ENCODE measurements at regions of chr1 and their contacts with region 1.

Region 1: GRCh38 chr1:165827268-165828102 is at the start of gene UCK2:
- DNase-seq: peak; percentile 23 to 90
- H3K4me3 ChIP-seq: peak within 1 kb of the TSS; percentile 90 to 96
- H3K27ac ChIP-seq: peak within 1 kb of the TSS; percentile 96 to 97
- H3K4me1 ChIP-seq: peaks cover 0 to 9% of the 10 kb centered on the region in 2 donors
- H3K27me3 ChIP-seq: no peaks in the 10 kb centered on the region
- CTCF ChIP-seq: no peak
- total RNA-seq, gene UCK2: 30.3 TPM

Region 2: DNA sequence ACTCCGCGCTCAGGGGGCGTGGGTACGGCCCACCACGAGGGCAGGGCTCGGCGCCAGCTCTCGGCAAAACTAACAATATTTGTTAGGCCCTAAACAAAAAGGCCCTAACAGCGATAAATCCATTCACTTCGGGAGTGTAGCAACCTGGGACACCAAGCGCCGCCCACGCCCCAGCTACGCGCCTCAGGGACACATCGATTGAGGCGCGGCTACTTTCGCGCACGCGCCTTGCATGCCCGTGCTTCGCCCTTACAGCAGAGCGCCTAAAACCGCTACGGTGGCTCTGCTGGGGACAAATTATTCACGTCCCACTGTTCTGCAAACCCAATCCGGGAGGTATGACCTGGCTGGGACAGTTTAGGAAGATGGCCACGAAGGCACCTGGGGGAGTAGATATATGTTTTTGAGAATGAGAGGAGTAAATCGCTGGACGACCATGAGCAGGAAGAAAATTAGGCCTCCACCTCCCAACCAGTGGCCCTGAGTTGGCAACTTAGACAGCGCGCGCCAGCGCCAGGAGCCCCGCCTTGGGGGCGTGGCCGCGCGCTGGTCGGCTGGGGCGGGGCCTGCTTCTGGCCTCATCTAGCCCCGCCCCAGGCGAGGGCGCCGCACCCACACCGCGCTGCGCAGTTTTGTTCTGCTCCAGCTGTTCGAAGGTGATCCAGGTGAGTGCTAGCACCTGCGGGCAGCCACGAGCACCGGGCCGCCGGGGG is 196.7 kb before region 1 on chr1 and contains the start of gene MGST3:
- intact Hi-C with region 1: loop called (anchors 1 kb)
- DNase-seq: peak; percentile 80 to 98
- H3K4me3 ChIP-seq: peak within 1 kb of the TSS; percentile 71 to 90
- H3K27ac ChIP-seq: peak within 1 kb of the TSS; percentile 90 to 91
- H3K4me1 ChIP-seq: peaks cover 3 to 20% of the 10 kb centered on the region in 2 donors
- H3K27me3 ChIP-seq: no peaks in the 10 kb centered on the region
- CTCF ChIP-seq: no peak
- total RNA-seq, gene MGST3: 177 TPM

Region 3: GRCh38 chr1:165697881-165698760 is 129.4 kb before region 1 on chr1 and contains the start of gene ALDH9A1:
- intact Hi-C with region 1: loop called (anchors 2 kb)
- DNase-seq: peak; percentile 63 to 95
- H3K4me3 ChIP-seq: peak within 1 kb of the TSS; percentile 85 to 86
- H3K27ac ChIP-seq: peak within 1 kb of the TSS; percentile 95 to 97
- H3K4me1 ChIP-seq: peaks cover 4 to 12% of the 10 kb centered on the region in 2 donors
- H3K27me3 ChIP-seq: no peaks in the 10 kb centered on the region
- CTCF ChIP-seq: peak; percentile 8 to 37 (median 17)
- total RNA-seq, gene ALDH9A1: 58.0 TPM

Region 4: DNA sequence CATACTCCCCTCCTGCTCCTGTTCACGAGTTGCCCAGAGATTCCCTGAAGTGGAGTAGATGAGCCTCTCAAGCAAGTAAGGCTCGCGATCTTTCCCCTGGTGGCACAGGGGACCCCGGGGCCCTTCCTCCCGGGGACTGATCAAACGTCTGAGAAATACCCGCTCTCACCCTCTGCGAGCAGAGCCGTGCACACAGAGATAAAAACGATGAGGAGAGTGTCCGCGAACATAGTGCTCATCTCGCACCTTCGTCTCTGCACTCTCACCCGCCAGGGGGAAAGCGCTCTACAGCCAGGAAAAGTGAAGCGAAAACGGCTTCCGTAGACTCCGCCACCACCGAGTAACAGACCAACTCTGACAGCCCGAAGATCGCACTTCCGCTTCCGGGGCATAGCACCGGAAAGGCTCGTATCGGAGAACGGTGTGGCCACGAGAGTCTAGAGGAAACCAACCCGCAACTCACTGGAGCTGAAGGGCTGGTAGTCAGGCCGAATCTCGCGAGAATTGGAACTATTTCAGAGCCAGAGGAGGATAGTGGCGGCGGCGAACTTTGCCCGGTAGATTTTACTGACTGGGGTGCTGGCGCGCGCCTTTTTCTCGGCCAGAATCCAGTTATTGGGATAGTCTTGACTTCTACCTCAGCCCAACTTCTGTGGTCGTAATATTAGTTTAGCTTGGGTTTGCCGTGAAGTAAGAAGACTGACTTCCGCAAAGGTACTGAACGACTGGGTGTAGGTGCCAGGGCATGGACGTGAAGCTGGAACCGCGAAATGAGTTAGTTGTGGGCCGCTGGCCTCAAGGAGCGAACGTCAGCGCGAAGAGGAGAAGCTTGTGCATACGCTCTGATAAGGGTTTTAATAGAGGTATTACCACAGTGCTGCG is 58.7 kb before region 1 on chr1 and contains the start of gene TMCO1:
- intact Hi-C with region 1: loop called (anchors 1 kb)
- DNase-seq: peak; percentile 90 to 99
- H3K4me3 ChIP-seq: peak within 1 kb of the TSS; percentile 86 to 93
- H3K27ac ChIP-seq: peak within 1 kb of the TSS; percentile 88 to 92
- H3K4me1 ChIP-seq: peaks cover 6 to 23% of the 10 kb centered on the region in 2 donors
- H3K27me3 ChIP-seq: no peaks in the 10 kb centered on the region
- CTCF ChIP-seq: peak in 1 of 3 experiments; percentile 8
- total RNA-seq, gene TMCO1: 9.9 TPM

Region 5: DNA sequence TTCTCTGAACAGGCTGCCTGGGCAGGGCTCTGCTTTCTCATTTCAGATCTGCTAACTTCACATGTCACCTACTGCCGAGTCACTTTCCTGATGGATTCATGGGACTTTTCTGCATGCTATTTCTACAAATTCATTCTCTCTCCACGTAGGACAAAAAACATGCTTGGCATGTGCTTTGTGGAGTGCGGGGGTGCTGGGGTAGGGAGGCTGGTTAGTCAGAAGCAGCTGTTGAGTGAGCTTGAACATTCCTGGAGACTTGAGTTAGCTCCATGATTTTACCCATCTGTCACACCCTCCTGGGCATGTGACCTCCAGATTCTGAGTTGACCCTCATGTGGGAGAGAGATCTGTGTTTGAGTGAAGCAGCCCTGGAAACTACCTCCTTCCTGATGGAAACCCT is 71.4 kb after region 1 on chr1:
- intact Hi-C with region 1: loop called (anchors 1 kb)
- DNase-seq: peak; percentile 65 to 91
- H3K4me3 ChIP-seq: no peak overlapping the region
- H3K27ac ChIP-seq: peak overlapping the region; percentile 93 to 95
- H3K4me1 ChIP-seq: peaks cover 21 to 47% of the 10 kb centered on the region in 2 donors
- H3K27me3 ChIP-seq: no peaks in the 10 kb centered on the region
- CTCF ChIP-seq: no peak

Region 6: DNA sequence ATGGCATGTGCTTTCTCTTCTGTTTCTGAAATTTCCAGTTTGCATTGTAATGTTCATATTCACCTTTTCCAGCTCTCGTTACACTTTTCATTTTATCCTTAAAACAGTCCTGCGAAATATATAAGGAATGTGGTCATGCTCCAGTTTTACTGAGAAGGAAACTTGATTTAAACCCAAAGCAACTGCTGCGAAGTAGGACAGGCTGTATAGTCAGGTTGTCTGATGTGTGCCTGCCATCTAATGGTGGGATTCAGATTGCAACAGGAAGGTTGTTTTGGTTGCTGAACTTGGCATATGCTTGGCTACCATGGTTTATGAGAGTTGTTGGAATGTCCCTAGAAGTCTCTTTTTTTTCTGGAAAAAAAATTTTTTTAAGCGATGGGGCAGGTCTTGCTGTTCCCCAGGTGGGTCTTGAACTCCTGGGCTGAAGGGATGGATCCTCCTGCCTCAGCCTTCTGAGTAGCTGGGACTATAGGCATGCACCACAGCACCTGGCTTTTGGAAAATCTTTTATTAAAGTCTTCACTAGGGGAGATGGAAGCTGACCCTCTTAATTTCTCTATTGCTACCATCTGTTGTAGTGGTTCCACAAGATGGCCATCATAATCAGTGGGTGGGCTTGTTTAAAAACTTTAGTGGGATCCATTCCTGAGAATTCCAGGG is 86.8 kb after region 1 on chr1:
- intact Hi-C with region 1: loop called (anchors 2 kb)
- DNase-seq: peak in 1 of 2 donors; percentile 84
- H3K4me3 ChIP-seq: no peak overlapping the region
- H3K27ac ChIP-seq: peak overlapping the region in 1 of 2 donors; percentile 32
- H3K4me1 ChIP-seq: peaks cover 0 to 3% of the 10 kb centered on the region in 2 donors
- H3K27me3 ChIP-seq: no peaks in the 10 kb centered on the region
- CTCF ChIP-seq: peak; percentile 86 to 91 (median 87)